ENCODE measurements at regions of chr4 and their contacts with region 1.

Region 1: DNA sequence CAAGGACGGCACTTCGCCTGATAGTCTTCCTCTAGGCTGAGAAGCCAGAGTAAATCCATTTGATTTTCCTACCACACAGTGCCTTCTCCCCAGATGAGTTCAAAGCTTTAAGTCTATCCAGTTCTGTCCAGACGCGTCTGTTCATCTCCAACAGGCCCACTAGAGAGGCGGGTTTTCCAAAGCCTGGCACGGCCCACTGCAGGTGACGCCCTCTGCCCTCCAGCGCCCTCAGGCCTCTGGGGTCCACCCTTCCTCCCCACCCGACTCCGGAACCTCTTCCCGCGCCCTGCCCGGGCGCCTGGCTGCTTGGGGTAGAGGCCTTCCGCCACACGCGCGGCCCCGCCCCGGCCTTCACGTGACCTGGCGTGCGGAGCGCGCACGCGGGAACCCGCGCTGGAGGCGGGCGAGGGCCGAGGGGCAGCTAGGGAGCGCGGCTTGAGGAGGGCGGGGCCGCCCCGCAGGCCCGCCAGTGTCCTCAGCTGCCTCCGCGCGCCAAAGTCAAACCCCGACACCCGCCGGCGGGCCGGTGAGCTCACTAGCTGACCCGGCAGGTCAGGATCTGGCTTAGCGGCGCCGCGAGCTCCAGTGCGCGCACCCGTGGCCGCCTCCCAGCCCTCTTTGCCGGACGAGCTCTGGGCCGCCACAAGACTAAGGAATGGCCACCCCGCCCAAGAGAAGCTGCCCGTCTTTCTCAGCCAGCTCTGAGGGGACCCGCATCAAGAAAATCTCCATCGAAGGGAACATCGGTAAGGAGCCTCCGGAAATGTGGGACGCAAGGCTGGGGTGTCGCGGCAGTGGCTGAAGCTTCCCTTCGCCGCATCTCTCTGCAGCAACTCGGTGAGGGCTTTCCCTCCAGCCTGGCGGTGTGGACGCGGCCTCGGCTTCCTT is at the start of gene DCK:
- DNase-seq: peak; percentile 91
- ATAC-seq: peak; percentile 81
- H3K4me3 Mint-ChIP-seq: peak within 1 kb of the TSS; percentile 94
- H3K27ac Mint-ChIP-seq: peak within 1 kb of the TSS; percentile 94
- H3K4me1 Mint-ChIP-seq: peaks cover 55% of the 10 kb centered on the region
- H3K27me3 Mint-ChIP-seq: no peaks in the 10 kb centered on the region
- CTCF ChIP-seq: no peak
- total RNA-seq, gene DCK: 32.6 and 34.3 TPM in 2 replicates

Region 2: DNA sequence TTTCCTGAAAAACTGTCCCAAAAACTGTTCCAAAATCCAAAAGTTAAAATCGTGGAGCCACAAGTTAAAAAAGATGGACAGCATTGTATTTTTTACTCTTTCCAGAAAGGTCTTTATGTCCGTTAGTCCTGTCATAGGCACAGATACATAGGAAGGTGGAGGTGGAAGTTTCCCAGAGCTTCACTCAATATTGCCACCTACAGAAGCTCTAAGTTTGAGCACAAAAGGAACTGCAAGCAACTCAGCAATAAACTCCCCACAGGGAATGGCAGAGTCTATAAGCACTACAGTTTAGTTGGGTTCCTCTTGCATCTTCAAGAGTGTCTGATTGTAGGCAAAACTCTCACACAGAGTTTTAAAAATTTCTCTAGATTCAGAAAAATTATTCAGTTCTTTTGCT is 1475.8 kb before region 1 on chr4:
- CTCF ChIA-PET with region 1: no interaction called
- POLR2A ChIA-PET with region 1: no interaction called
- intact Hi-C with region 1: no loop called
- DNase-seq: no peak
- ATAC-seq: no peak
- H3K4me3 Mint-ChIP-seq: no peak overlapping the region
- H3K27ac Mint-ChIP-seq: no peak overlapping the region
- H3K4me1 Mint-ChIP-seq: no peaks in the 10 kb centered on the region
- H3K27me3 Mint-ChIP-seq: no peaks in the 10 kb centered on the region
- CTCF ChIP-seq: no peak

Region 3: GRCh38 chr4:70687821-70688794 is 305.3 kb before region 1 on chr4 and contains the start of gene UTP3:
- CTCF ChIA-PET with region 1: interaction called, 3 read pairs
- POLR2A ChIA-PET with region 1: interaction called, 6 read pairs
- intact Hi-C with region 1: loop called (anchors 1 kb)
- DNase-seq: peak; percentile 83
- ATAC-seq: peak; percentile 88
- H3K4me3 Mint-ChIP-seq: peak within 1 kb of the TSS; percentile 99
- H3K27ac Mint-ChIP-seq: peak within 1 kb of the TSS; percentile 100
- H3K4me1 Mint-ChIP-seq: peaks cover 48% of the 10 kb centered on the region
- H3K27me3 Mint-ChIP-seq: no peaks in the 10 kb centered on the region
- CTCF ChIP-seq: peak; percentile 96
- total RNA-seq, gene UTP3: 38.5 and 40.1 TPM in 2 replicates

Region 4: GRCh38 chr4:70927502-70928137 is 65.8 kb before region 1 on chr4:
- CTCF ChIA-PET with region 1: no interaction called
- POLR2A ChIA-PET with region 1: interaction called, 6 read pairs
- intact Hi-C with region 1: loop called (anchors 1 kb)
- DNase-seq: no peak
- ATAC-seq: peak; percentile 45
- H3K4me3 Mint-ChIP-seq: peak overlapping the region; percentile 33
- H3K27ac Mint-ChIP-seq: peak overlapping the region; percentile 68
- H3K4me1 Mint-ChIP-seq: peaks cover 51% of the 10 kb centered on the region
- H3K27me3 Mint-ChIP-seq: no peaks in the 10 kb centered on the region
- CTCF ChIP-seq: no peak

Region 5: DNA sequence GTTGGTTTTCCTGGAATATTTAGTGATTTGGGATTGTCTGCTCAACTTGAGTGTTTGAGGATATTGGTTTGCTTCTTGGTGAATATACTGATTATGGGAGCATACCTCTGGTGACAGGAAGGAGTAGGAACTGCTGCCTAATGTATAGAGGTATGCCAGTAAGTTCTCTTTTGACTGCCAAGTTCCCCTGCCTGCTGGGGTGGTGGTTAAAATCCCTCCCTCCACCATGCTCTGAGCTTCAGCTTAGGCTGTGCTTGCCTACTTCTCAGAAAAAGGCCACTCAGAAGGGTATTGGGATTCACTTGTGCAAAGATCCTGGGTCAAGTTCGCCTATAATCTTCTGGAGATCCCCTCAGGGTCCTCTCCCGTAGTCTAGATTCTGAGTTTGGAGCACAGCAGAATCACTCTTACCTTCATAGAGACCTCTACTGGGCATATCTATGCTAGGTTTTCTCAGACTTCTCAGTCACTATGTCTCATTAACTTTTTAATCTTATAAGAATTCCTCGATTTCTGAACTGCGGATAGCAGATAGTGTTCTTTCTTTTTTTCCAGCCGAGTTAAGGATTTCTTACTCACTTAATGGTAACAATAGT is 44.7 kb before region 1 on chr4:
- CTCF ChIA-PET with region 1: no interaction called
- POLR2A ChIA-PET with region 1: interaction called, 14 read pairs
- intact Hi-C with region 1: loop called (anchors 5 kb)
- DNase-seq: no peak
- ATAC-seq: peak; percentile 47
- H3K4me3 Mint-ChIP-seq: peak overlapping the region; percentile 13
- H3K27ac Mint-ChIP-seq: no peak overlapping the region
- H3K4me1 Mint-ChIP-seq: peaks cover 34% of the 10 kb centered on the region
- H3K27me3 Mint-ChIP-seq: no peaks in the 10 kb centered on the region
- CTCF ChIP-seq: no peak

Region 6: DNA sequence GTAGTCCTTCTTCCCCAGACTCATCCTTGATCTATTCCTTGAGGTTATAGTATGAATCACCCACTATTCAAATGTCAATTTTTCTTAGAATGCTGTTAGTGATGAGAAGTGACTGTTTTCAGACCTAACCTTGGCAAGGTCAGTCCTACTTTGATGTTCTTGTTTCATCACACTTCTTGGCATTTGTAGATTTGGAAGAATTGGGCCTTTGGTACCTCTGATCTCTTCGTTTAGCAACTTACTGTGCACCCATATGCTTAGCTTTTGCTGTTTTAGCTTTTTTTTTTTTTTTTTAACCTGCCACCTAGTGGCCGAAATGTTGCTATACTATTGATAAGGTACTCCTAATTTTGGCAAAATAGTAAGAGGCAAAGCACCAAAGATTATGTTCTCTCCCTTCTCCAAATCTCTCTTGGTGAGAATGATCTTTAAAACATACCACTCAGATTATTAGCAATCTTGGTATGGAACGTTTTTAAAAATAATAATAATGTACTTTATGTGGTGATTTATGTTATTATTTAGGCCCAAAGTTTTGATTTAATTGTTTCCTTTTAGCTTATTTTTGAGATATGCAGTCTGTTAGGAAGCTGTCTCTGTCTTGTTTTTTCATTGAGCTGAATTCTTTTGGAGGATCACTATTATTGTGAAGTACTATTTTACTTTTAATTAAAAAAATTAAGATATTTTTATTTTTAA is 16.6 kb after region 1 on chr4:
- CTCF ChIA-PET with region 1: interaction called, 86 read pairs
- POLR2A ChIA-PET with region 1: interaction called, 203 read pairs
- intact Hi-C with region 1: loop called (anchors 1 kb)
- DNase-seq: no peak
- ATAC-seq: peak; percentile 46
- H3K4me3 Mint-ChIP-seq: peak overlapping the region; percentile 2
- H3K27ac Mint-ChIP-seq: peak overlapping the region; percentile 64
- H3K4me1 Mint-ChIP-seq: peaks cover 65% of the 10 kb centered on the region
- H3K27me3 Mint-ChIP-seq: no peaks in the 10 kb centered on the region
- CTCF ChIP-seq: peak; percentile 56

Region 7: DNA sequence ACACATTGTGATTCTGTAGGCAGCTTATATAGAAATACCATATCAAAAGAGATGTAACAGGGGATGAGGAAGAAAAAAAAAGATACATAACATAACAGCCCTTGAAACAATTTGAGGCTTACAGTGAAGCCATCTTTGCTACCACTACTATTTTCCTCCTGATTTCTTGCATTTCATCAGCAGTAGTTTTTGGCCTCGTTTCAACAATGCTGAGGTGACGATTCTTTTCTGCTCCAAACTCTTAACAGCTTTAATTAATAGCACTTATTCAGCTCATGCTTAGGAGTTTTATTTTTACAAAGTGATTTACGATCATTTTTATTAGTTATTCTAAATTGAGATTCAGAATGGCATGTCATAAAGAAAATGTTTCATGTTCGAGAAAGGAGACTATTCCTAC is 163.2 kb after region 1 on chr4:
- CTCF ChIA-PET with region 1: no interaction called
- POLR2A ChIA-PET with region 1: no interaction called
- intact Hi-C with region 1: no loop called
- DNase-seq: no peak
- ATAC-seq: no peak
- H3K4me3 Mint-ChIP-seq: no peak overlapping the region
- H3K27ac Mint-ChIP-seq: no peak overlapping the region
- H3K4me1 Mint-ChIP-seq: no peaks in the 10 kb centered on the region
- H3K27me3 Mint-ChIP-seq: peaks cover 9% of the 10 kb centered on the region
- CTCF ChIP-seq: no peak

Measured in activated B cell treated with CpG ODN at 0.5 μM for 24 hours (primary cell).